GM18951 (cell line): ENCODE measurements at regions of chr17 and their contacts with region 1.

Region 1: GRCh38 chr17:65198653-65199382 is 61.6 kb downstream of the RGS9 start:
- POLR2A ChIP-seq: no peak

Region 2: DNA sequence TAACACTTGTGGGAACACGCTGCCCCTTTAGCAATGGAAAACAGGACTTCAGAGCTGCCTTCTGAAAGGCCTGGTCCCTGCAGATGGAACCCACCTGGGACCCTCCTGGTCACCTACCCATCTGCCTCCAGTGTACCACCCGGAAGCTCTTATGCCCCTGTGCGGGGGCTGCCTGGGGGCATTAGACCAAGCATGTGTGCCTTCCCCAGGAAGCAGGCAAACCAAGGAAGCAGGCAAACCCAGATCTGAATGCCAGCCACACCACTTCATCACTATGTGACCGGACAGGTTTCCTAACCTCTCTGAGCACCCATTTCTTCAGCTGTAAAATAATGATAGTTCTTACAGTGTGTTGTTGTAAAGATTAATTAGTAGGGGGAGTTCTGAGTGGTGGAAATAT is 258.8 kb before region 1 on chr17:
- in situ Hi-C with region 1: loop called (anchors 10 kb)
- POLR2A ChIP-seq: no peak